ENCODE measurements at regions of chrX and their contacts with region 1.

Region 1: GRCh38 chrX:14243823-14244222 is 214.1 kb upstream of the GEMIN8 start:
- DNase-seq: no peak

Region 2: GRCh38 chrX:15619061-15619777 is 1375.4 kb after region 1 on chrX:
- intact Hi-C with region 1: loop called in 1 of 2 experiments (anchors 5 kb)
- DNase-seq: no peak